Mucosa of descending colon (tissue), 3 donors: ENCODE measurements at regions of chr22 and their contacts with region 1.

Region 1: GRCh38 chr22:42169055-42169469 is 38.5 kb upstream of the CYP2D6 start:
- DNase-seq: peak in 2 of 3 donors; percentile 75 to 86
- ATAC-seq: peak; percentile 89
- H3K4me3 ChIP-seq: no peak overlapping the region
- H3K4me1 ChIP-seq: peaks cover 18% of the 10 kb centered on the region
- CTCF ChIP-seq: peak; percentile 59

Region 2: GRCh38 chr22:41998361-41999275 is 170.4 kb before region 1 on chr22 and contains the start of gene WBP2NL:
- intact Hi-C with region 1: no loop called
- DNase-seq: peak; percentile 91 to 93 (median 91)
- ATAC-seq: peak; percentile 99
- H3K4me3 ChIP-seq: peak within 1 kb of the TSS; percentile 7
- H3K4me1 ChIP-seq: peaks cover 5% of the 10 kb centered on the region
- CTCF ChIP-seq: no peak
- total RNA-seq, gene WBP2NL: 0.63 to 3.7 (median 1.8) TPM

Region 3: GRCh38 chr22:42090596-42091454 is 78.2 kb before region 1 on chr22 and contains the start of gene NDUFA6:
- intact Hi-C with region 1: loop called in 1 of 2 experiments (anchors 5 kb)
- DNase-seq: peak; percentile 98 to 99 (median 99)
- ATAC-seq: peak; percentile 97
- H3K4me3 ChIP-seq: peak within 1 kb of the TSS; percentile 51
- H3K4me1 ChIP-seq: peaks cover 8% of the 10 kb centered on the region
- CTCF ChIP-seq: peak; percentile 82
- total RNA-seq, gene NDUFA6: 85.3 to 106 (median 105) TPM

Region 4: DNA sequence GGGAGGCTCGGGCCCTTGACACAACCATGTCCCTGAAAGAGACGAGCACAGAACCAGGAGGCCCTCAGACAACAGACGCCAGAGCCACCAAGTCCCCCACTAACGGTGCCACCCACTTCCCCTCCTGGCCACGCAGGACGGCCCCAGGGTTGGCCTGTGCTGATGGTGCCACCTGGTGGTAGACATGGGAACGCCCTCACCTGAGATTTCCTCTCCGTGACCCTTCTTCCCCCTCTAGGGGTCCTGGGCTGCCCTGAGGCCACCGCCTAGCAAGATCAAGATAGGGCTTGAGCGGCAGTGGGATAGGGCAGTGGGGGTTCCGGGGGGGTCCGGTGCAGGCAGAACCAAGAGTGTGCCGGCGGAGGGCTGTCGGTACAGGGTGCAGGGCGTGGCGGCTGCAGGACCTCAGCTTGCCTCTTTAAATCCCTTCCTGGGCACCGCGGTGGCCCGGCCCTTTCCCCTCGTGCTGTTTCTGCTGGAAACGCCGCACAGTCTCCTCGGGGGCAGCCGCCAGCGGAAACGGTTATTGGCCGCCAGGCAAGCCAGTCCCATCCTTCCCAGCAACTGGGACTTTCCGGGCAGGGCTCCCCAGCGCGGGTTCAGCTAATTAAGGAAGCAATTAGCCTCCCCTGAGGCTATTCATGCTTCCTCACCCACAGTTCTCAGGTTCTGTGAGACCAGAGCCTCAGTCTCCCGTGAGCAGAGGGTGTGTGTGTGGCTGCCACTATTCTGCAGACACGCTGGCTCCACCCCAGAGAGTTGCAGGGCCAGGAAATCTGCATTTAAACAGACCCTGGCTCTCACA is 268.6 kb after region 1 on chr22:
- intact Hi-C with region 1: loop called (anchors 2 to 10 kb)
- DNase-seq: peak; percentile 81 to 85 (median 84)
- ATAC-seq: peak; percentile 92
- H3K4me3 ChIP-seq: no peak overlapping the region
- H3K4me1 ChIP-seq: no peaks in the 10 kb centered on the region
- CTCF ChIP-seq: peak; percentile 84